ENCODE measurements at regions of chr4 and their contacts with region 1.

Region 1: DNA sequence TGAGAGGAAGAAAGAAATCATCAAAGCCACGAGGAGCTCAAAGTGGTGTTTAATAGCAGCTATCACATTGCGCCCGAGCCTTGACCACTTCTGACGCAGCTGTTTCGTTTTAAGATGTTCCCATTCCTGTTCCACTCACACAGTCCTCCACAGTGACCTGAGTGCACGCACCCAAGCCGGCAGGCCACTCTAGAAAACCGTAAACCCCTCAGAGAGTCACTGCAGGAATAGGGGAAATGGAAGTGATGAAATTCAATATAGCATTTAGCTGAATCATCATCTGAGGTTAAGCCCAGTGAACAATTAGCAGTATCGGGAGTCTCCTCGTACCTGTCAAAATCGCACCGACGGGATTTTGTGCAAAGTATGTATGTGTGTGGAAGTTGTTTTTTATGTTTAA is 17.9 kb upstream of the HAND2 start:
- DNase-seq: no peak
- ATAC-seq: no peak
- H3K4me3 ChIP-seq: no peak overlapping the region
- H3K4me3 Mint-ChIP-seq: no peak overlapping the region
- H3K27ac ChIP-seq: no peak overlapping the region
- H3K27ac Mint-ChIP-seq: no peak overlapping the region
- H3K4me1 ChIP-seq: no peaks in the 10 kb centered on the region
- H3K4me1 Mint-ChIP-seq: no peaks in the 10 kb centered on the region
- H3K27me3 ChIP-seq: peaks cover 0 to 2% of the 10 kb centered on the region in 2 experiments
- H3K27me3 Mint-ChIP-seq: peaks cover 51% of the 10 kb centered on the region
- CTCF ChIP-seq: no peak

Region 2: GRCh38 chr4:173609158-173609557 is 61.3 kb after region 1 on chr4:
- CTCF ChIA-PET with region 1: no interaction called
- POLR2A ChIA-PET with region 1: no interaction called
- intact Hi-C with region 1: loop called in 1 of 2 experiments (anchors 2 kb)
- DNase-seq: no peak
- ATAC-seq: no peak
- H3K4me3 ChIP-seq: no peak overlapping the region
- H3K4me3 Mint-ChIP-seq: no peak overlapping the region
- H3K27ac ChIP-seq: no peak overlapping the region
- H3K27ac Mint-ChIP-seq: no peak overlapping the region
- H3K4me1 ChIP-seq: no peaks in the 10 kb centered on the region
- H3K4me1 Mint-ChIP-seq: no peaks in the 10 kb centered on the region
- H3K27me3 ChIP-seq: no peaks in the 10 kb centered on the region
- H3K27me3 Mint-ChIP-seq: peaks cover 5% of the 10 kb centered on the region
- CTCF ChIP-seq: no peak

Measured in CD8-positive, alpha-beta T cell (primary cell).